ENCODE measurements at regions of chr5 and their contacts with region 1.

Region 1: DNA sequence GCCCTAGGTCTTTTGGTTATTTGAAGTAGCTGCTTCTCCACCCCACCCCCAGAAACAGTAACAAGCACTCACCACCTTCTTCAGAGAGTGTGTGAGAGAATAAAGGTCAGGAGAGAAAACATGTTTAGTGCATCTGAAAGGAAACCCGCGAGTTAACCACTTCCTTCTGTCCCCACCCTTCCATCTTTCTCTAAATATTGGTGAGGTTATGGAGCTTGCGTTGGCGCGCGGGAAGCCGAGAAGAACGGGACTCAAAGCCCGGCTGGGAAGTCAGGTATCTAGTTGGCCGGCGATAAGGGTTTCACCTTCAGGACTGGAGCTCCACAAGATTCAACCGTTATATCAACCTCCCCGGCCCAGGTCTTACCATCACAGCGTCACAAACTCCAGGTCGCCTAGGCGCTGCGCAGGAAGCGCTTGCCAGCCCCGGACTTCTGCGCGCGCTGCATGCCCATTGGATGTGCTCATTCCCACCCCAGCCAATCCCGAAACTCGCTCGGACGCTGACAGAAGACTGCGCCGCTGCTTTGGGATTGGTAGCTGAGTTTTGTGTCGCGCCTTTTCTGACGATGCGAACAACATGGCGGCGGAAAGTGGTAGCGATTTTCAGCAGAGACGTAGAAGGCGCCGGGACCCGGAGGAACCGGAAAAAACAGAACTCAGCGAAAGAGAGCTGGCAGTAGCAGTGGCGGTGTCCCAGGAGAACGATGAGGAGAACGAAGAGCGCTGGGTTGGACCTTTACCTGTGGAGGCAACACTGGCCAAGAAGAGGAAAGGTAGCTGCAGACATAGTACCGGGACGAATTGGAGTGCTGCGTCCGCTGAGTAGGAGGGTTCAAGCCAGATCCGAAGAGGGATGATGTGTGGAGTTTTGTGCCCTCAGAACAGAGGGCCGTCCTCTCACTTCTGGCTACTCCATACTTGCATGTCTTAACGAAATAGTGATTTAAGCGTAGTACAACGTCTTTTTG is at the starts of genes CENPK and PPWD1:
- DNase-seq: peak; percentile 93 to 97 (median 96)
- H3K4me3 ChIP-seq: peak within 1 kb of the TSS; percentile 73 to 80
- H3K4me3 Mint-ChIP-seq: peak within 1 kb of the TSS; percentile 98 to 99 (median 98)
- H3K27ac ChIP-seq: peak within 1 kb of the TSS; percentile 92
- H3K27ac Mint-ChIP-seq: peak within 1 kb of the TSS; percentile 96 to 99 (median 99)
- H3K4me1 ChIP-seq: peaks cover 54% of the 10 kb centered on the region
- H3K4me1 Mint-ChIP-seq: peaks cover 32 to 58% (median 41%) of the 10 kb centered on the region in 4 donors
- H3K27me3 ChIP-seq: no peaks in the 10 kb centered on the region
- H3K27me3 Mint-ChIP-seq: no peaks in the 10 kb centered on the region
- total RNA-seq, gene CENPK: 13.6 to 15.4 TPM
- total RNA-seq, gene PPWD1: 102 to 104 TPM

Region 2: GRCh38 chr5:64768358-64769312 is 794.4 kb before region 1 on chr5 and contains the starts of genes CWC27 and SREK1IP1:
- CTCF ChIA-PET with region 1: interaction called, 4 read pairs
- POLR2A ChIA-PET with region 1: interaction called, 16 read pairs
- intact Hi-C with region 1: loop called (anchors 2 kb)
- DNase-seq: peak; percentile 85 to 88 (median 85)
- H3K4me3 ChIP-seq: peak within 1 kb of the TSS; percentile 83 to 94
- H3K4me3 Mint-ChIP-seq: peak within 1 kb of the TSS; percentile 98 to 100 (median 100)
- H3K27ac ChIP-seq: peak within 1 kb of the TSS; percentile 86
- H3K27ac Mint-ChIP-seq: peak within 1 kb of the TSS; percentile 95 to 100 (median 98)
- H3K4me1 ChIP-seq: peaks cover 47% of the 10 kb centered on the region
- H3K4me1 Mint-ChIP-seq: peaks cover 49 to 82% (median 57%) of the 10 kb centered on the region in 4 donors
- H3K27me3 ChIP-seq: no peaks in the 10 kb centered on the region
- H3K27me3 Mint-ChIP-seq: no peaks in the 10 kb centered on the region
- total RNA-seq, gene CWC27: 16.8 to 17.8 TPM
- total RNA-seq, gene SREK1IP1: 18.4 to 20.2 TPM

Region 3: DNA sequence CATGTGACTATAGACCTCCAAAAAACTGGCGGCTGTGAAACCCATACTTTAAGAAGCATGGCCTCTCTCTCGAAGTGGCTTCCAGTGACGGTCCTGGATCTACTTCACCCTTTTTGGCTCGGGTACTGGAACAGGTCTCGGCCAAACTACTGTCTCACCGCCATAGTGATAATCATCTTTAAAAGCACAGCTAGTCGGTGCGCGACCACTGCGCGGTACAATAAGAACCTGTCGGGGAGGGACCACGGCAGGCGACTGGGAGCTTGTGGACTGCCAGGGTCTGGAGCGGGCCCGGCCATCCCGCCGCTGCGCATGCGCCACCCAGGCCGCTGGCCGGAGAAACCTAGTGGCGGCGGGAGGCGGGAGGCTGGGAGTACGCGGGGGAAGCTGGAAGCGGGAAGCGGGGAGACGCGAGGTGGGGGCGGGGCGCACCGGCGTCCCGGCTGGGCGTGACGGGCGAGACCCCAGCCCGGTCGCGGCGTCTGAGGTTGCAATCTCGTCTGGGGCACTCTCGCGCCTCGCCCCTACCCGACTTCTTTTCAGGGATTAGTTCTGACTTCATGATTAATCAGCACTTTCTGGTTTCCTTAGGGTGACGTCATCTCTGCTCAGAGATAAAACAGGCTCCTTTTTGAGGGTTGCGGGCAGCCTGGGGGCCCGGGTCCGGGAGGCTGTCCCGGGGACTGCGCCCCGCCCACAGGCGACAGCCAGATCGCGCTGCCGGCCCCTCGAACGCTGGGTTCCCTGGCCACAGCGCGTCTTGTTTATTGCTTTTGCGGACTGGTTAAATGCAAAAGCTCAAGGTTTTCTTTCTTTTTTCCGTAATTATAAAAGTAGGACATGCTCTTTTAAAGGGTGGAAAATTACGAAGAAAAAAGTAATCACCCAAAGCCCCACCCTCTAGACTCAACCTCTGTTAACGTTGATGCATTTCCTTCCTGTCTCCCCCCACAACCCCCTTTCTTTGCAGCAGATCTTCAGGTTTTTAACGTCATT is 527.5 kb before region 1 on chr5:
- CTCF ChIA-PET with region 1: no interaction called
- POLR2A ChIA-PET with region 1: interaction called, 16 read pairs
- intact Hi-C with region 1: loop called (anchors 1 kb)
- DNase-seq: peak; percentile 86 to 94 (median 90)
- H3K4me3 ChIP-seq: peak overlapping the region; percentile 66 to 74
- H3K4me3 Mint-ChIP-seq: peak overlapping the region; percentile 66 to 92 (median 84)
- H3K27ac ChIP-seq: peak overlapping the region; percentile 90
- H3K27ac Mint-ChIP-seq: peak overlapping the region; percentile 80 to 100 (median 95)
- H3K4me1 ChIP-seq: peaks cover 30% of the 10 kb centered on the region
- H3K4me1 Mint-ChIP-seq: peaks cover 18 to 38% (median 28%) of the 10 kb centered on the region in 4 donors
- H3K27me3 ChIP-seq: no peaks in the 10 kb centered on the region
- H3K27me3 Mint-ChIP-seq: no peaks in the 10 kb centered on the region

Region 4: DNA sequence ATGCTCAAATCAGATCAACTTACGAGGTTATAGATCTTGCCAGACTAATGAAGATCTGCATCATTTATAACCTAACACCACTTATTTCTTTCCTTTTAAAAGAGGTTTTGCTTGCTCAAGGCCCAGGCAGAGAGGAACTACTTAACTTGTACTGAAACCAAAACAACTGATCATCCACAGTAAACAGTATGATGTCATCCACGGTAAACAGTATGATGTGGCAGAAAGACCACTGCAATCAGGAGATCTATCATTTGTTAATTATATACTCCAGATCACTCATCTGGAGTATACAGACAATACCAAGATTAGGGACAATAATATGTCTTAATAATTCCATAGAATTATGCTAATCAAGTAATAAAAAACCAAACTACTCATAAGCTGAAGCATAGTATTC is 198.1 kb before region 1 on chr5:
- CTCF ChIA-PET with region 1: no interaction called
- POLR2A ChIA-PET with region 1: no interaction called
- intact Hi-C with region 1: no loop called
- DNase-seq: no peak
- H3K4me3 ChIP-seq: no peak overlapping the region
- H3K4me3 Mint-ChIP-seq: no peak overlapping the region
- H3K27ac ChIP-seq: no peak overlapping the region
- H3K27ac Mint-ChIP-seq: no peak overlapping the region
- H3K4me1 ChIP-seq: no peaks in the 10 kb centered on the region
- H3K4me1 Mint-ChIP-seq: no peaks in the 10 kb centered on the region
- H3K27me3 ChIP-seq: no peaks in the 10 kb centered on the region
- H3K27me3 Mint-ChIP-seq: no peaks in the 10 kb centered on the region

Region 5: DNA sequence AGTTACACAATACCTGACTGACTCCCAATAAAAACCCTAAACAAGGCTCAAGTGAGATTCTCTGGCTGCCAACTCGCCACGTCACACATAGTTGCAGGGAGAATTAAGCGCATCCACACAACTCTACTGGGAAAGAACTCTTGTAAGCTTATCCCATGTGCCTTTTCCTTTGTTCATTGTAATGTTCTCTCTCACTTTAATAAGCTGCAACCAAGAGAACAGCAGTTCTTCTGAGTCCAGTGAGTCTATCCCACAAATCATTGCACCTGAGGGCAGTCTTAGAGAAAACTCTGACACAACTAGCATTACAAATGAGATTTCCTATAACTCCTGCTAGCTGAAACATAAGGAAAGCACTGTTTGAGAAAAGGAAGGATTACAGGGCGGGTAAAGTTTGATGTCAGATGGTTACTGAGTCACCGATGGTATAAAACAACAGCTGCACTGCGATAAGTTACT is 27.5 kb before region 1 on chr5:
- CTCF ChIA-PET with region 1: interaction called, 4 read pairs
- POLR2A ChIA-PET with region 1: interaction called, 19 read pairs
- intact Hi-C with region 1: no loop called
- DNase-seq: no peak
- H3K4me3 ChIP-seq: no peak overlapping the region
- H3K4me3 Mint-ChIP-seq: no peak overlapping the region
- H3K27ac ChIP-seq: no peak overlapping the region
- H3K27ac Mint-ChIP-seq: peak overlapping the region in 1 of 7 donors; percentile 15
- H3K4me1 ChIP-seq: no peaks in the 10 kb centered on the region
- H3K4me1 Mint-ChIP-seq: no peaks in the 10 kb centered on the region
- H3K27me3 ChIP-seq: no peaks in the 10 kb centered on the region
- H3K27me3 Mint-ChIP-seq: no peaks in the 10 kb centered on the region

Region 6: GRCh38 chr5:65721720-65722574 is 158.9 kb after region 1 on chr5 and contains the starts of genes NLN and SGTB:
- CTCF ChIA-PET with region 1: interaction called, 3 read pairs
- POLR2A ChIA-PET with region 1: interaction called, 43 read pairs
- intact Hi-C with region 1: loop called (anchors 2 kb)
- DNase-seq: peak; percentile 78 to 86 (median 82)
- H3K4me3 ChIP-seq: peak within 1 kb of the TSS; percentile 57 to 64
- H3K4me3 Mint-ChIP-seq: peak within 1 kb of the TSS; percentile 88 to 98 (median 94)
- H3K27ac ChIP-seq: peak within 1 kb of the TSS; percentile 91
- H3K27ac Mint-ChIP-seq: peak within 1 kb of the TSS in 6 of 7 donors; percentile 75 to 93 (median 90)
- H3K4me1 ChIP-seq: peaks cover 46% of the 10 kb centered on the region
- H3K4me1 Mint-ChIP-seq: peaks cover 9 to 22% (median 14%) of the 10 kb centered on the region in 4 donors
- H3K27me3 ChIP-seq: no peaks in the 10 kb centered on the region
- H3K27me3 Mint-ChIP-seq: no peaks in the 10 kb centered on the region
- total RNA-seq, gene NLN: 2.3 to 2.4 TPM
- total RNA-seq, gene SGTB: 42.6 to 46.5 TPM

Region 7: GRCh38 chr5:65779643-65780042 is 216.6 kb after region 1 on chr5:
- CTCF ChIA-PET with region 1: no interaction called
- POLR2A ChIA-PET with region 1: no interaction called
- intact Hi-C with region 1: no loop called
- DNase-seq: peak in 1 of 5 donors; percentile 20
- H3K4me3 ChIP-seq: no peak overlapping the region
- H3K4me3 Mint-ChIP-seq: peak overlapping the region in 7 of 8 donors; percentile 7 to 84 (median 55)
- H3K27ac ChIP-seq: no peak overlapping the region
- H3K27ac Mint-ChIP-seq: peak overlapping the region in 6 of 7 donors; percentile 26 to 90 (median 70)
- H3K4me1 ChIP-seq: peaks cover 9% of the 10 kb centered on the region
- H3K4me1 Mint-ChIP-seq: peaks cover 8 to 23% (median 15%) of the 10 kb centered on the region in 4 donors
- H3K27me3 ChIP-seq: no peaks in the 10 kb centered on the region
- H3K27me3 Mint-ChIP-seq: no peaks in the 10 kb centered on the region

Measured in CD4-positive, alpha-beta memory T cell (primary cell).